ENCODE measurements at regions of chr2 and their contacts with region 1.

Region 1: GRCh38 chr2:219597552-219598307 is at the start of gene STK11IP:
- DNase-seq: peak; percentile 75 to 95 (median 84)
- ATAC-seq: peak; percentile 85
- H3K4me3 ChIP-seq: peak within 1 kb of the TSS; percentile 73
- H3K4me3 Mint-ChIP-seq: peak within 1 kb of the TSS; percentile 98
- H3K27ac ChIP-seq: peak within 1 kb of the TSS; percentile 70 to 79
- H3K27ac Mint-ChIP-seq: peak within 1 kb of the TSS; percentile 94
- H3K4me1 ChIP-seq: peaks cover 13% of the 10 kb centered on the region
- H3K4me1 Mint-ChIP-seq: peaks cover 24% of the 10 kb centered on the region
- H3K27me3 ChIP-seq: no peaks in the 10 kb centered on the region
- H3K27me3 Mint-ChIP-seq: peaks cover 7% of the 10 kb centered on the region
- CTCF ChIP-seq: no peak
- total RNA-seq, gene STK11IP: 23.9 to 27.2 TPM

Region 2: DNA sequence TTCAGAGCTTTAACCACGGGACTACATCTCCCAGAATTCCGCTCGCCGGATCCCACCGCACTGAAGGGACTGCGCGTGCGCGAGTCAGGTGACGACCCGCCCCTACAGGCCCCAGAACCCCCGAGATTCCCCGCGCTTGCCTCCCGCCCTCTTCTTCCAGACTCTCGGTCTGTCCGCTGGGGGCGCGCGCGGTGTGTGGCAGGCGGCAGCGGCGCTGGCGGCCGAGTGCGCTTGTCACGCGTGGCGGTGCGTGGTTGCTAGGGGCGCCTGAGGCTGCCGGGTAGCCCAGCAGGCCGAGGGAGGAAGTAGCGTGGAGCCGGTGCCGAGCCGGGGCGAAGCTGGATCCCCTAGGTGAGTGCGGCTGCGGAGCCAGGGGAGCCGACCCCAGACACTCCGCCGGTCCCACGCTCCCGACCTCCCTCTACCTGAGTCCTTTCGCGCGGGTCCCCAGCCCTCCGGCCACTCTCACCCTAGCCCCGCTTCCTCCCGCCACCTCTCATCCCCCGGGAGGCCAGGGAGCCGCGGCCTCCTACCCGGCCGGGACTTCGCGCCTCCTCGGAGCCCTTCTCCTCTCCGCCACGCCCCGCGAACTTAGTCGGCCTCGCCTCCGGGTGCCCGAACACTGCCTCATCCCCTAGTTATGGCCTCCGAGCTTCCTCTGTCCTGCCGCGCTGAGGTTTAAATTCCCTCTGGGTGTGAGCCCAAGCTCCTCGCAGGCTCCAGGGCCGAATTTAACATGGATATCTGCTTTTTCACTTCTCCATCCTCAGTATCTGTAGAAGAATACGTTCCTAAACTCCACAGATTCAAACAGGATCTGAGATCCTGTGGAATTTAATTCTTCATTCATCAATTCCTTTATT is 886.8 kb before region 1 on chr2 and contains the start of gene TTLL4:
- CTCF ChIA-PET with region 1: no interaction called
- POLR2A ChIA-PET with region 1: no interaction called
- intact Hi-C with region 1: loop called in 1 of 2 experiments (anchors 5 kb)
- DNase-seq: peak; percentile 97 to 99 (median 99)
- ATAC-seq: peak; percentile 98
- H3K4me3 ChIP-seq: peak within 1 kb of the TSS; percentile 96
- H3K4me3 Mint-ChIP-seq: peak within 1 kb of the TSS; percentile 99
- H3K27ac ChIP-seq: peak within 1 kb of the TSS; percentile 66 to 87
- H3K27ac Mint-ChIP-seq: peak within 1 kb of the TSS; percentile 91
- H3K4me1 ChIP-seq: peaks cover 22% of the 10 kb centered on the region
- H3K4me1 Mint-ChIP-seq: peaks cover 26% of the 10 kb centered on the region
- H3K27me3 ChIP-seq: peaks cover 0 to 6% of the 10 kb centered on the region in 2 experiments
- H3K27me3 Mint-ChIP-seq: peaks cover 10% of the 10 kb centered on the region
- CTCF ChIP-seq: peak; percentile 87
- total RNA-seq, gene TTLL4: 7.3 to 10.8 TPM

Region 3: GRCh38 chr2:219441451-219442255 is 156.1 kb before region 1 on chr2:
- CTCF ChIA-PET with region 1: no interaction called
- POLR2A ChIA-PET with region 1: no interaction called
- intact Hi-C with region 1: loop called in 1 of 2 experiments (anchors 5 kb)
- DNase-seq: peak; percentile 34 to 89 (median 61)
- ATAC-seq: peak; percentile 82
- H3K4me3 ChIP-seq: peak overlapping the region; percentile 59
- H3K4me3 Mint-ChIP-seq: peak overlapping the region; percentile 81
- H3K27ac ChIP-seq: no peak overlapping the region
- H3K27ac Mint-ChIP-seq: no peak overlapping the region
- H3K4me1 ChIP-seq: peaks cover 12% of the 10 kb centered on the region
- H3K4me1 Mint-ChIP-seq: peaks cover 22% of the 10 kb centered on the region
- H3K27me3 ChIP-seq: peaks cover 2 to 12% of the 10 kb centered on the region in 2 experiments
- H3K27me3 Mint-ChIP-seq: peaks cover 27% of the 10 kb centered on the region
- CTCF ChIP-seq: no peak

Region 4: GRCh38 chr2:219498280-219499057 is 99.3 kb before region 1 on chr2 and contains the start of gene GMPPA:
- CTCF ChIA-PET with region 1: interaction called, 4 read pairs
- POLR2A ChIA-PET with region 1: no interaction called
- intact Hi-C with region 1: loop called in 1 of 2 experiments (anchors 5 kb)
- DNase-seq: peak; percentile 82 to 97 (median 88)
- ATAC-seq: peak; percentile 94
- H3K4me3 ChIP-seq: peak within 1 kb of the TSS; percentile 91
- H3K4me3 Mint-ChIP-seq: peak within 1 kb of the TSS; percentile 93
- H3K27ac ChIP-seq: peak within 1 kb of the TSS in 1 of 2 donors; percentile 45
- H3K27ac Mint-ChIP-seq: peak within 1 kb of the TSS; percentile 63
- H3K4me1 ChIP-seq: peaks cover 44% of the 10 kb centered on the region
- H3K4me1 Mint-ChIP-seq: peaks cover 37% of the 10 kb centered on the region
- H3K27me3 ChIP-seq: peaks cover 40 to 43% of the 10 kb centered on the region in 2 experiments
- H3K27me3 Mint-ChIP-seq: peaks cover 49% of the 10 kb centered on the region
- CTCF ChIP-seq: no peak
- total RNA-seq, gene GMPPA: 13.3 to 14.4 TPM

Region 5: DNA sequence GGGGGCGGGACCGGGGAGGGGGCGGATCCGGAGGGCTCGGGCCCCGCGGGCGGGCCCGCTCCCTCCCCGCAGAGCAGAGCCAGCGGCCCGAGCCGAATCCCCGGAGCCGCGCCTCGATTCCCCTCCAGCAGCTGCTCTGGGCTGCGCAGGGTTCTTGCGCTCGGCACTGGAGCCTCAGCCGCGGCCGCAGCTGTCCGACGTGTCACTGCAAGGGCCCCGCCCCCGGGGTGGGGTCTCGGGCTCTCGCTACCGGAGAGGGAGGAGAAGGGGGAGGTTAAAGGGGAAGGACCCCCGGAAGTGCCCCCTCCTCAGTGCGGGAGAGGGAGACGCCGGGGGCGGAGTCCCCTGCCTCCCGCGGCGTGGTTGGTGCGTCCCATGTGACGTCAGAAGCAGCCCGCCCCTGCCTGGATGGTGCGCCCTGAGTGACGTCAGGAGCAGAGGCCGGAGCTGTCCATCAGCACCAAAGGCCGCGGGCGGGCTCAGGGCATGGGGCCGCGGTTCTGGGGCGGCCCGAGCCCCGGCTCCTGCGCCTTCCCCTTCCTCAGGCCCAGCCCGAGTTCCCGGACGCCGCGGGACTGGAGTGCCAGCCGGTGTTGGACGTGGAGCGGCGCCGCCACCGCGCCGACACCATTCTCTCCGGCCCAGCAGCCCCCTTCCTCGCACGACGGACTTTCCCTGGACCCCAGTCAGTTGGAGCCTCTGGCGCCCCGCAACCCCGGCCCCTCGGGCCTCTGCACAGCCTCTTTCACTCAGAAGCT is 54.0 kb before region 1 on chr2 and contains the starts of genes CHPF and TMEM198:
- CTCF ChIA-PET with region 1: interaction called, 3 read pairs
- POLR2A ChIA-PET with region 1: interaction called, 10 read pairs
- intact Hi-C with region 1: loop called (anchors 2 kb)
- DNase-seq: peak; percentile 83 to 97 (median 90)
- ATAC-seq: peak; percentile 69
- H3K4me3 ChIP-seq: peak within 1 kb of the TSS; percentile 72
- H3K4me3 Mint-ChIP-seq: peak within 1 kb of the TSS; percentile 86
- H3K27ac ChIP-seq: peak within 1 kb of the TSS; percentile 54 to 60
- H3K27ac Mint-ChIP-seq: peak within 1 kb of the TSS; percentile 75
- H3K4me1 ChIP-seq: peaks cover 32% of the 10 kb centered on the region
- H3K4me1 Mint-ChIP-seq: peaks cover 22% of the 10 kb centered on the region
- H3K27me3 ChIP-seq: no peaks in the 10 kb centered on the region
- H3K27me3 Mint-ChIP-seq: peaks cover 7% of the 10 kb centered on the region
- CTCF ChIP-seq: no peak
- total RNA-seq, gene CHPF: 6.5 to 7.1 TPM
- total RNA-seq, gene TMEM198: 0.47 to 0.91 TPM

Region 6: DNA sequence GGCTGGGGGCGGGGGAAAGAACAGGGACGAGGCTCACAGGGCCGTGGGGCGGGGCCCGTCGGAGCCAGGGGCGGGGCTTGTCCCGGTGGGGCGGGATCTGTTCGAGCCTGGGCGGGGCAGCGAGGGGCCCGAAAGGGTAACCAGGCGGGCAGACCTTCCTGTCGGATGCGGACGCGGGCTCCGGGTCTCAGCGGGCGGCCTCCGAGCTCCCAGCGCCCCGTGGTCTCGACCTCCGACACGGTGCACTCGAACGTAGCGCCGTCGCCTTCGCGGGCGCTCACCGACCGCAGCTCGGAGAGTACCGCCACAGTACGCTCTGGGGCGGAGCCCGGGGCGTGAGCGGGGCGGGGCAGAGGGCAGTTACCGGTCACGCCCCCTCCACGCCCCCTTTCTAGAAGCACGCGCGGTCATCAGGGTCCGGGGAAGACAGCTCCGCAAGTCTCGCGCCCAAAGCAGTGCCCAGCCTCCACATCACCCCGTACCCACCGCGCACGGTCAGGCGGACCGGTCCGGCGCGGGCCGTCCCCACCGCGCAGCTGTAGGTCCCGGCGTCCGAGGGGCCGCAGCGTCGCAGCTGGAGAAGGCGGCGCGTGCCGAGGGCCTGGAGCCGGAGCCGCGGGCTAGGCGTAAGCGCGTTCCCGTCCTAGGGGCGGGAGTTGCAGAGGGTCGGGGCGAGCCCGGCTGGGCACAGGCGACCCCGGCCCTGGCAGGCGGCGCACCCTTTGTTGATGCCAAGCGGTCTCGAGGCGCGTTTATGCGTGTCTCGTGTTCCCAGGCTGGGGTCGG is 45.2 kb before region 1 on chr2:
- CTCF ChIA-PET with region 1: interaction called, 3 read pairs
- POLR2A ChIA-PET with region 1: no interaction called
- intact Hi-C with region 1: loop called in 1 of 2 experiments (anchors 1 kb)
- DNase-seq: peak; percentile 53 to 90 (median 73)
- ATAC-seq: peak; percentile 85
- H3K4me3 ChIP-seq: peak overlapping the region; percentile 46
- H3K4me3 Mint-ChIP-seq: peak overlapping the region; percentile 86
- H3K27ac ChIP-seq: no peak overlapping the region
- H3K27ac Mint-ChIP-seq: no peak overlapping the region
- H3K4me1 ChIP-seq: peaks cover 24% of the 10 kb centered on the region
- H3K4me1 Mint-ChIP-seq: peaks cover 17% of the 10 kb centered on the region
- H3K27me3 ChIP-seq: peaks cover 33 to 50% of the 10 kb centered on the region in 2 experiments
- H3K27me3 Mint-ChIP-seq: peaks cover 58% of the 10 kb centered on the region
- CTCF ChIP-seq: no peak

Region 7: GRCh38 chr2:219642465-219643080 is 44.8 kb after region 1 on chr2:
- CTCF ChIA-PET with region 1: interaction called, 5 read pairs
- POLR2A ChIA-PET with region 1: no interaction called
- intact Hi-C with region 1: loop called in 1 of 2 experiments (anchors 5 kb)
- DNase-seq: peak; percentile 78 to 95 (median 84)
- ATAC-seq: peak; percentile 100
- H3K4me3 ChIP-seq: no peak overlapping the region
- H3K4me3 Mint-ChIP-seq: no peak overlapping the region
- H3K27ac ChIP-seq: no peak overlapping the region
- H3K27ac Mint-ChIP-seq: no peak overlapping the region
- H3K4me1 ChIP-seq: peaks cover 13% of the 10 kb centered on the region
- H3K4me1 Mint-ChIP-seq: peaks cover 6% of the 10 kb centered on the region
- H3K27me3 ChIP-seq: peaks cover 0 to 7% of the 10 kb centered on the region in 2 experiments
- H3K27me3 Mint-ChIP-seq: peaks cover 39% of the 10 kb centered on the region
- CTCF ChIP-seq: peak; percentile 99